Right cardiac atrium (tissue), 5 donors: ENCODE measurements at regions of chr1 and their contacts with region 1.

Region 1: DNA sequence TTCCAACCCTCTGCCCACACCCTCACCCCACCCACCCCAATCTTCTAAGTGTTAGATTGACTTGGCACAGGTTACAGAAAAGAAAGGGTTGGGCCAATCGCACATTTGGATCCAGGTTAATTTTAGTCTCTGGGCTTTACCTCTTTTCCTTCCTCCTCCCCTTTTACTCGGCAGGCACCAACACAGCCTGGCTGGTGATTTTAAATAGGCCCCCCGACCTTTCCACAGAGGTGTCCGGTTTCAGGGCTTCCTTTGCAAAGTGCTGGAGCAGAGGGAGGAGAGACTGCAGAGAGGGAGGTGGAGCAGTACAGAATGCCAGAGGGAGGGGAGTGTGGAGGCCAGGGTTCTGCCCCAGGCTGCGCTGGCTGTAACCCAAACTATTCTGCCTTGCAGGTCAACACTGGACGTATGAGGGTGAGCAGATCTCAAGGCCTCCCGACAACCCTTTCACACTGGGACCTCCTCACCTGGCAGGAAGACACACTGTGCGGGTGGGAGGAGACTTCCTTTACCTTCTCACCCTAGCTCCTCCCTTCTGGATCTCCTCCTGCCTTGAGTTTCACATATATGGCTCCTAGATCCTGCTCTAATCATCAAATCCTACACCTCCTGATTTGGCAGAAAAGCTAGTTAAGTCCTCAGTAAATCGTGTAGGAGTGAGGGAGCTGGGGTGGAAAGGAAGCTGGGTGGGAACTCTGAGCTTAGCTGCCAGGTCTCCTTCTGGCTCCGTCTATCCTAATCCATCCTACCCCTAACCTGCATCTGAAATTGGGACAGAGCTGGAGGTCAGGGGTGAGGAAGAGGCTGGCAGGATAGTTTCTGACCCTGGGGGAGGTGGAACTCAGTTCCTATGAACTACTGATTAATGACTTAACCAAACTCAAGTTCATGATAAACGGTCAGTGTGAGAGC is 2.4 kb downstream of the CA14 start:
- DNase-seq: peak in 2 of 3 donors; percentile 64 to 65
- ATAC-seq: peak; percentile 48 to 65
- H3K4me3 ChIP-seq: no peak overlapping the region
- H3K27ac ChIP-seq: peak overlapping the region; percentile 9
- H3K4me1 ChIP-seq: peaks cover 2% of the 10 kb centered on the region
- H3K27me3 ChIP-seq: no peaks in the 10 kb centered on the region

Region 2: DNA sequence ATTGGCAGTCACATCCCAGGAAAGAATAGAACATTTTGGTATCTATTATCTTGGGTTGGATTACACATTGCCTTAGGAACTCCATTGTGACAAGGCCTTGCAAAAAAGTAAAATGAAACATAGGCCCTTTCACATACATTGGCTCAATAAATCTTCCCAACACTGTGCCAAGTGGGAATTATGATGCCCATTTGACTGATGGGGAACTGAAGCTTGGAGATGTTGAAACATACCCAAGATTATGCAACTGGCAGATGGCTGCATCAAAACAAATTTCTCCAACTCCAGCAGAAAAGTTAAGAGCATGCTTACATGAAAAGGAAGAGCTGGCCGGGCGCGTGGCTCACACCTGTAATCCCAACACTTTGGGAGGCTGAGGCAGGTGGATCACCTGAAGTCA is 83.4 kb before region 1 on chr1:
- intact Hi-C with region 1: no loop called
- DNase-seq: no peak
- ATAC-seq: no peak
- H3K4me3 ChIP-seq: no peak overlapping the region
- H3K27ac ChIP-seq: no peak overlapping the region
- H3K4me1 ChIP-seq: no peaks in the 10 kb centered on the region
- H3K27me3 ChIP-seq: no peaks in the 10 kb centered on the region

Region 3: DNA sequence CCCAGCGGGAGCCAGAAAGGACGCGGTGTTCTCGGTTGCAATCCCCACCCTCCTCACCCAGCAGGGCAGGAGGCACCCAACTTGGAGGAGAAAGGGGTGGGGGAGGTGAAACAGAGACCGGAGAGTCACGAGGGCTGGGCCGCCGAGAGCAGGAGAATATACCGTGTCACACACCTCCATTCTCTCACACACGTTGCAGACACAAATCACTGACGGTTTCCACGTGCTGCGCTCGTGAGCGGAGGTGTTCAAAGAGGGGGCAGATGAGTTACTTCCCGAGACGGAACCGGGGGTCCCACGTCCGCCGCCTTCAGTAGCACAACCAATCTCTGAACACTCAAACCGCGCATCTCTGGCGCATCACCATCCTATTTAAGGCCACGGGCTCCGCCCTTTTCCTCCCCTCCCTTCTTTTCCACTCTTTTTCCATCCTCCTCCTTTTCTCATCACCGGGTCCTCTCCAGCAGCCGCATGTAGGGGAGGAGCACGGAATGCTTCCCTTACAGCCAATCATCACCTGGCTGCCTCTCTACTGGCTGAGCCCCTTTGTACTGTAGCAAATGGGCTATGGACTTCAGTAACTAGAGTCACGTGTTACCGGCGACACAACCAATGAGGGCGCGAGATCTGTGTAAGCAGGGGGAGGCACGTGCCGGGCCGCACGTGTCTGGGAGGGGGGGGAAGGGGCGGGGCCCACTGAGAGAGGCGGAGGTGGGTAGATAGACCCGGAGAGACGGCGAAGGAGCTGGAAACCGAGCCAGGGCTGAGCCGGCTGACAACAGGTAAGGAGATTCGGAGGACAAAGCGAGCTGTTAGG is 22.0 kb after region 1 on chr1 and contains the start of gene CIART:
- intact Hi-C with region 1: loop called in 2 of 4 experiments (anchors 1 to 2 kb)
- DNase-seq: peak; percentile 95 to 97 (median 96)
- ATAC-seq: peak; percentile 98
- H3K4me3 ChIP-seq: peak within 1 kb of the TSS; percentile 65
- H3K27ac ChIP-seq: peak within 1 kb of the TSS; percentile 97
- H3K4me1 ChIP-seq: peaks cover 4% of the 10 kb centered on the region
- H3K27me3 ChIP-seq: no peaks in the 10 kb centered on the region
- total RNA-seq, gene CIART: 5.5 to 20.4 (median 11.4) TPM

Region 4: DNA sequence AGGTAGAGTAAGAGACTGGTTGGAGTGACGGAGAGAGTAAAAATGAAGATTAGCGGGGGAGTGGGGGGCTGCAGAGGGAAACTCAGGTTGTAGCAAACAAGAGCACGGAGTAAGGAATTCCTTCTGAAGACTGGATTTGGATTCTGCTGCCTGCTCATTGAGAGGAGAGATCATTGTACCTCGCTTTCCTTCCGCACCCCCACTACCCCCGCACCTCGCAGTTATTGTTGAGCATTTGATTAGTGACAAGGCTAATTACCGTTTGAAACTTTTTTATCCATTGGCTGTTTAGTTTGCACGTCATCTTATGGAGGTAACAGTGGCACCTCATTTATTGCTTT is 61.8 kb after region 1 on chr1:
- intact Hi-C with region 1: loop called in 1 of 4 experiments (anchors 10 kb)
- DNase-seq: no peak
- ATAC-seq: no peak
- H3K4me3 ChIP-seq: peak overlapping the region; percentile 66
- H3K27ac ChIP-seq: peak overlapping the region; percentile 74
- H3K4me1 ChIP-seq: no peaks in the 10 kb centered on the region
- H3K27me3 ChIP-seq: no peaks in the 10 kb centered on the region